ENCODE measurements at regions of chr9 and their contacts with region 1.

Region 1: DNA sequence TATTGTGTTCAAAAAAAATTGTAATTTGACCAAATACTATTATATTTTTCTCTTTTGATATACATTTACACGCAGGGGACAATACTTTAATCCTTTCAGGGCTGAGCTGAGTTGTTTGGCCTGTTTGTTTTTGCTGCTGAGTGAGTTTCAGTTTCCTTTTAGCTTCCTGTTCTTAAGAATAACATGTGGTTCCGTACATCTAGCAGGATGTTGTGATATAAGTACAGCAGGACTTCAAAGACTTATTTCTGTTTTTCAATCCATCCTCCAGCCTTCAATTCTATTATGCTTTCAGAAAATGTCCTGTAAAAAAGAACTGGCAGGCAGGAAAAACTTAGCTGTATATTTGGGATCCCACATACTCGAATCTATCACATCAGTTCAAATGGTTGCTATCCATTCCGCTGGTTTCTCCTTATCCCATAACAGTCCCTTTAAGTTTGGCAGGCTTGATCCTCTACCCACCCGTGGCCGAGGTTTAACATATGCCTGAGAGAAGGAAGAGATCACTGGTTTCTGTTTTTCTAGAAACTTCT is 1037.3 kb upstream of the ACO1 start:
- DNase-seq: peak in 5 of 9 experiments; percentile 20 to 87 (median 56)
- ATAC-seq: peak; percentile 98
- H3K4me3 ChIP-seq: peak overlapping the region in 1 of 2 experiments; percentile 2
- H3K4me3 Mint-ChIP-seq: peak overlapping the region; percentile 59
- H3K27ac ChIP-seq: peak overlapping the region; percentile 62 to 81
- H3K27ac Mint-ChIP-seq: peak overlapping the region; percentile 94
- H3K4me1 ChIP-seq: peaks cover 22% of the 10 kb centered on the region
- H3K4me1 Mint-ChIP-seq: peaks cover 46% of the 10 kb centered on the region
- H3K27me3 ChIP-seq: no peaks in the 10 kb centered on the region
- H3K27me3 Mint-ChIP-seq: no peaks in the 10 kb centered on the region
- CTCF ChIP-seq: no peak

Region 2: GRCh38 chr9:31364171-31364570 is 17.0 kb after region 1 on chr9:
- CTCF ChIA-PET with region 1: no interaction called
- POLR2A ChIA-PET with region 1: interaction called, 6 read pairs
- intact Hi-C with region 1: loop called in 1 of 2 experiments (anchors 2 kb)
- DNase-seq: no peak
- ATAC-seq: no peak
- H3K4me3 ChIP-seq: no peak overlapping the region
- H3K4me3 Mint-ChIP-seq: no peak overlapping the region
- H3K27ac ChIP-seq: no peak overlapping the region
- H3K27ac Mint-ChIP-seq: no peak overlapping the region
- H3K4me1 ChIP-seq: no peaks in the 10 kb centered on the region
- H3K4me1 Mint-ChIP-seq: no peaks in the 10 kb centered on the region
- H3K27me3 ChIP-seq: no peaks in the 10 kb centered on the region
- H3K27me3 Mint-ChIP-seq: no peaks in the 10 kb centered on the region
- CTCF ChIP-seq: no peak

Region 3: GRCh38 chr9:31377358-31377757 is 30.2 kb after region 1 on chr9:
- CTCF ChIA-PET with region 1: no interaction called
- POLR2A ChIA-PET with region 1: no interaction called
- intact Hi-C with region 1: no loop called
- DNase-seq: no peak
- ATAC-seq: no peak
- H3K4me3 ChIP-seq: no peak overlapping the region
- H3K4me3 Mint-ChIP-seq: no peak overlapping the region
- H3K27ac ChIP-seq: no peak overlapping the region
- H3K27ac Mint-ChIP-seq: no peak overlapping the region
- H3K4me1 ChIP-seq: no peaks in the 10 kb centered on the region
- H3K4me1 Mint-ChIP-seq: no peaks in the 10 kb centered on the region
- H3K27me3 ChIP-seq: no peaks in the 10 kb centered on the region
- H3K27me3 Mint-ChIP-seq: no peaks in the 10 kb centered on the region
- CTCF ChIP-seq: no peak

Region 4: GRCh38 chr9:31394015-31394473 is 46.9 kb after region 1 on chr9:
- CTCF ChIA-PET with region 1: no interaction called
- POLR2A ChIA-PET with region 1: interaction called, 4 read pairs
- intact Hi-C with region 1: loop called in 1 of 2 experiments (anchors 5 kb)
- DNase-seq: no peak
- ATAC-seq: no peak
- H3K4me3 ChIP-seq: no peak overlapping the region
- H3K4me3 Mint-ChIP-seq: no peak overlapping the region
- H3K27ac ChIP-seq: no peak overlapping the region
- H3K27ac Mint-ChIP-seq: no peak overlapping the region
- H3K4me1 ChIP-seq: peaks cover 7% of the 10 kb centered on the region
- H3K4me1 Mint-ChIP-seq: peaks cover 18% of the 10 kb centered on the region
- H3K27me3 ChIP-seq: no peaks in the 10 kb centered on the region
- H3K27me3 Mint-ChIP-seq: no peaks in the 10 kb centered on the region
- CTCF ChIP-seq: no peak

Region 5: DNA sequence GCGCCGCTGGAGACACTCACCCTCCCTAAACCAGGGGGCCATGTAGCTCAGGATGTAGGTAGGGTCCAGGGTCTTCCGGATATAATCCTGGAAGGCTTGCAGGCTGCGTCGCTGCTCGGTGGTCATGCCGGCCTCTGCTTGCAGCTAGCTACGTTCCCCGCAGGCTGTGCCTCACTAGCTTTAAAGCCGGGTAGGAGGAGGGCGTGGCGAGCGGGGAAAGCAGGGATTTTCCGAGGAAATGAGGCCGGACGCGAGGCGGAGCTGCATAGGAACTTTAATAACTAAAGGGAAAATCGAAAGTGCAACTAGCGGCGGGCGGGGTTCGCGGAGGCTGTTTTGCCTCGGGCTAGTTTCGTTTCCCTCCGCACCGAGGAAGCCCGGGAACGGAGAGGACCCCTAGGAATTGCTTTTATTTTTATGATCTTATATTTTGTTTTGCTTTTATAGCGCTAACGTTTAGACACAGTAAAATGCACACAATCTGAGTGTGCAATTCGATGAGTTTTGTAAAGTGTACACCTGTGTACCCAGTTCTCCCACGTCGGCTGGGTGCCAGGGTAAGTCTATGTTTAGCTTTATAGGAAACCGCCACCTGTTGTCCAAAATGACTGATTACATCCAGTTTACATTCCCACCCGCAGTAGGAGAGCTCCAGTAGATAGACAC is 1179.0 kb after region 1 on chr9 and contains the start of gene RIGI:
- CTCF ChIA-PET with region 1: no interaction called
- POLR2A ChIA-PET with region 1: no interaction called
- intact Hi-C with region 1: loop called in 1 of 2 experiments (anchors 10 kb)
- DNase-seq: peak; percentile 47 to 94 (median 80)
- ATAC-seq: peak; percentile 79
- H3K4me3 ChIP-seq: peak within 1 kb of the TSS; percentile 79 to 85
- H3K4me3 Mint-ChIP-seq: peak within 1 kb of the TSS; percentile 98
- H3K27ac ChIP-seq: peak within 1 kb of the TSS; percentile 85 to 86
- H3K27ac Mint-ChIP-seq: peak within 1 kb of the TSS; percentile 98
- H3K4me1 ChIP-seq: peaks cover 22% of the 10 kb centered on the region
- H3K4me1 Mint-ChIP-seq: peaks cover 55% of the 10 kb centered on the region
- H3K27me3 ChIP-seq: no peaks in the 10 kb centered on the region
- H3K27me3 Mint-ChIP-seq: no peaks in the 10 kb centered on the region
- CTCF ChIP-seq: peak; percentile 60
- total RNA-seq, gene RIGI: 3.4 to 3.9 TPM

Region 6: GRCh38 chr9:32550562-32551433 is 1203.6 kb after region 1 on chr9:
- CTCF ChIA-PET with region 1: no interaction called
- POLR2A ChIA-PET with region 1: no interaction called
- intact Hi-C with region 1: loop called in 1 of 2 experiments (anchors 10 kb)
- DNase-seq: peak; percentile 90 to 99 (median 96)
- ATAC-seq: peak; percentile 85
- H3K4me3 ChIP-seq: peak overlapping the region; percentile 85 to 87
- H3K4me3 Mint-ChIP-seq: peak overlapping the region; percentile 94
- H3K27ac ChIP-seq: peak overlapping the region; percentile 91 to 97
- H3K27ac Mint-ChIP-seq: peak overlapping the region; percentile 99
- H3K4me1 ChIP-seq: peaks cover 23% of the 10 kb centered on the region
- H3K4me1 Mint-ChIP-seq: peaks cover 57% of the 10 kb centered on the region
- H3K27me3 ChIP-seq: no peaks in the 10 kb centered on the region
- H3K27me3 Mint-ChIP-seq: no peaks in the 10 kb centered on the region
- CTCF ChIP-seq: peak; percentile 19

Measured in CD8-positive, alpha-beta T cell (primary cell).